CD14-positive monocyte (primary cell): ENCODE measurements at regions of chr12 and their contacts with region 1.

Region 1: GRCh38 chr12:12010277-12011039 is 60.3 kb upstream of the BCL2L14 start:
- DNase-seq: peak; percentile 90 to 95 (median 91)
- H3K4me3 ChIP-seq: peak overlapping the region; percentile 37 to 69 (median 42)
- H3K4me3 Mint-ChIP-seq: peak overlapping the region; percentile 78 to 83
- H3K27ac ChIP-seq: peak overlapping the region; percentile 81 to 97
- H3K27ac Mint-ChIP-seq: peak overlapping the region; percentile 96 to 98 (median 97)
- H3K4me1 ChIP-seq: peaks cover 47 to 50% of the 10 kb centered on the region in 2 donors
- H3K4me1 Mint-ChIP-seq: peaks cover 63% of the 10 kb centered on the region
- H3K27me3 ChIP-seq: no peaks in the 10 kb centered on the region
- H3K27me3 Mint-ChIP-seq: peaks cover 0 to 3% (median 0%) of the 10 kb centered on the region in 3 donors
- CTCF ChIP-seq: no peak

Region 2: GRCh38 chr12:11855983-11856374 is 154.5 kb before region 1 on chr12:
- intact Hi-C with region 1: loop called in 1 of 2 experiments (anchors 10 kb)
- DNase-seq: peak; percentile 50 to 71 (median 62)
- H3K4me3 ChIP-seq: peak overlapping the region in 2 of 3 experiments; percentile 17 to 64
- H3K4me3 Mint-ChIP-seq: peak overlapping the region; percentile 58 to 78
- H3K27ac ChIP-seq: peak overlapping the region; percentile 72 to 93
- H3K27ac Mint-ChIP-seq: peak overlapping the region; percentile 91 to 97 (median 95)
- H3K4me1 ChIP-seq: peaks cover 43 to 47% of the 10 kb centered on the region in 2 donors
- H3K4me1 Mint-ChIP-seq: peaks cover 47% of the 10 kb centered on the region
- H3K27me3 ChIP-seq: no peaks in the 10 kb centered on the region
- H3K27me3 Mint-ChIP-seq: no peaks in the 10 kb centered on the region
- CTCF ChIP-seq: no peak

Region 3: GRCh38 chr12:11885261-11886038 is 125.0 kb before region 1 on chr12:
- intact Hi-C with region 1: loop called in 1 of 2 experiments (anchors 10 kb)
- DNase-seq: peak; percentile 51 to 89 (median 70)
- H3K4me3 ChIP-seq: peak overlapping the region in 1 of 3 experiments; percentile 21
- H3K4me3 Mint-ChIP-seq: no peak overlapping the region
- H3K27ac ChIP-seq: peak overlapping the region; percentile 88 to 92
- H3K27ac Mint-ChIP-seq: peak overlapping the region; percentile 81 to 94 (median 89)
- H3K4me1 ChIP-seq: peaks cover 31 to 33% of the 10 kb centered on the region in 2 donors
- H3K4me1 Mint-ChIP-seq: peaks cover 38% of the 10 kb centered on the region
- H3K27me3 ChIP-seq: no peaks in the 10 kb centered on the region
- H3K27me3 Mint-ChIP-seq: no peaks in the 10 kb centered on the region
- CTCF ChIP-seq: no peak